Activated naive CD4-positive, alpha-beta T cell treated with anti-CD3 and anti-CD28 coated beads, Interleukin-2, amount 10 ng/mL, durations not matched to agents 7 days and 5 days (primary cell): ENCODE measurements at regions of chrX and their contacts with region 1.

Region 1: DNA sequence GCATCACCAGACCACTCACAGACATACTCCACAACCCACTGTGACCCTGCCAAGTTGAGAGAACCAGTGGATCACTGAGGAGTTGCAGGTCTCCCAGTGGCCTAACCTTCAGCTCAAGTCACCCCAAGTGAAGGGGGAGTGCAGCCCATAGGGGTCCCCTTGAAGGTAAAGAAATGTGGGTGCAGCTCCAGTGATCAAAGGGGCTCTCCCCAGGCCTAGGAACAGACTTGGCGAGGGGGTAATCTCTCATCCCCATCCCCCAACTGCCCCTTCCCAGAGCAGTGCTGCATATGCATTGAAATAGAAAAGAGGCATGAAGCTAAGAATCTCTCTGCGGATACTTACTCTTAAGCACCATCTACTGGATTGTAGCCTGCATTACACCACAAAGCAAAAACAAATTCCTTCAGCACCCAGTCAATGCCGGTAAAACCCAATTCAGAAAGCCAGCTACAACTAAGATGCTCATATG is 27.0 kb downstream of the MAGEE1 start:
- DNase-seq: no peak
- H3K4me3 Mint-ChIP-seq: no peak overlapping the region
- H3K27ac Mint-ChIP-seq: no peak overlapping the region
- H3K4me1 Mint-ChIP-seq: no peaks in the 10 kb centered on the region
- H3K27me3 Mint-ChIP-seq: no peaks in the 10 kb centered on the region

Region 2: DNA sequence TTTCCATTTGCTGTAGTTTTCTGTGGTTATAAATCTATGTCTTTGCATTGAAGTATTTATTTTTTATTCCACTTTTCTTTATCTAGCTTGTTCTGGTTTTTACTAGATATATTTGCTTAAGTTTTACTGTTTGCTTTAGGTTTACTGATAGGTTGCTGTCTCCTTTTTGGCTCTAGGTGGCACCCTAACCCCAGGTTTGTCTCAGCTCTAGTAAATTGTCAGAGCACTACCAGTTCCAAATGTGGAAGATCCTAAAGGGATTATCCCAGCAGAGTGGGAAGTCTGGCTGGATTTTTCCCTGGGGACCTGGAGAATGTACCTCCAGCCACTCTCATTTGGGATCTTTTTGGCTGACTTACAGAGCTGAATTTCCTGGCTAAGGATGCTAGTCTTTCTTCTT is 175.5 kb before region 1 on chrX:
- CTCF ChIA-PET with region 1: interaction called, 38 read pairs
- DNase-seq: peak; percentile 56
- H3K4me3 Mint-ChIP-seq: no peak overlapping the region
- H3K27ac Mint-ChIP-seq: no peak overlapping the region
- H3K4me1 Mint-ChIP-seq: no peaks in the 10 kb centered on the region
- H3K27me3 Mint-ChIP-seq: no peaks in the 10 kb centered on the region

Region 3: GRCh38 chrX:76477353-76477752 is 22.9 kb after region 1 on chrX:
- CTCF ChIA-PET with region 1: no interaction called
- DNase-seq: no peak
- H3K4me3 Mint-ChIP-seq: no peak overlapping the region
- H3K27ac Mint-ChIP-seq: no peak overlapping the region
- H3K4me1 Mint-ChIP-seq: no peaks in the 10 kb centered on the region
- H3K27me3 Mint-ChIP-seq: no peaks in the 10 kb centered on the region

Region 4: GRCh38 chrX:76850851-76851250 is 396.4 kb after region 1 on chrX:
- CTCF ChIA-PET with region 1: no interaction called
- DNase-seq: no peak
- H3K4me3 Mint-ChIP-seq: no peak overlapping the region
- H3K27ac Mint-ChIP-seq: no peak overlapping the region
- H3K4me1 Mint-ChIP-seq: no peaks in the 10 kb centered on the region
- H3K27me3 Mint-ChIP-seq: no peaks in the 10 kb centered on the region